ENCODE measurements at regions of chr14 and their contacts with region 1.

Region 1: GRCh38 chr14:104387022-104388010 is 192.2 kb upstream of the C14orf180 start:
- DNase-seq: no peak
- H3K4me3 ChIP-seq: no peak overlapping the region
- H3K27ac ChIP-seq: no peak overlapping the region
- H3K4me1 ChIP-seq: no peaks in the 10 kb centered on the region
- H3K27me3 ChIP-seq: no peaks in the 10 kb centered on the region
- CTCF ChIP-seq: no peak

Region 2: DNA sequence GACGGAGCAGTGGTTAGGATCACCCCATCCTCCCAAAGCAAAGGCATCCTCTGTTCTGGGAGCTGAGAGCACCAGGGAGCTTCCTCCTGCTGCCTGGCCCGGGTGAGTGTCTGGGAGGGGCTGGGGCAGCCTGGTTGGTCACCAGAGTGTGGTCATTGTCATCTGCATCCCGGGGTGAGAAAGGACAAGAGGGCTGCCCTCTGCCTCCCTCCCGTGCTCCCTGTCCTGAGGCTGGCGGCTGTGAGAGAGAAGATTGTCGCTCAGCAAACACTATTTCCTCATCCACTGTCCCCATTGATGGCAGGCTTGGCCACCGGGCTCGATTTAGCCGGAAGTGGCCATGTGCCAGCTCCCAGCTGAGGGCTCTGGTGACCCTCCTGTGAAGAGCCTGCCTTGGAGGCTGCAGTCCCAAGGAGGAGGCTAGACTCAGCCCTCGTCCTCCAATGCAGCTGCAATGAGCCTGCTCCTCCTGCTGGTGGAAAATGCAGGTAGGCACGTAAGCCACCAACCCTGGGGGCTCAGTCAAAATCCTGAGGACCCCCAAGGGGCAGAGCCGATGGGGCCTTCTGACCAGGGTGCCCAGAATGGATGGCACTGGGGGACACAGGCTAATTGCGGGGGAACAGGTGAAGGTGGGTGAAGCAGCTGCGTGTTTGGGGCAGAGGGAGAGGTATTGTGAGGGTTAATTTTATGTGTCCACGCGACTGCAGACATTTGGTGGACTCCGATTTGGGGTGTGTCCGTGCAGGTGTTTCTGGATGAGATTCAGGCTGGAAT is 93.3 kb before region 1 on chr14:
- CTCF ChIA-PET with region 1: no interaction called
- dilution Hi-C with region 1: loop called (anchors 5 kb)
- in situ Hi-C with region 1: no loop called
- intact Hi-C with region 1: no loop called
- DNase-seq: no peak
- H3K4me3 ChIP-seq: no peak overlapping the region
- H3K27ac ChIP-seq: no peak overlapping the region
- H3K4me1 ChIP-seq: no peaks in the 10 kb centered on the region
- H3K27me3 ChIP-seq: no peaks in the 10 kb centered on the region
- CTCF ChIP-seq: no peak

Region 3: DNA sequence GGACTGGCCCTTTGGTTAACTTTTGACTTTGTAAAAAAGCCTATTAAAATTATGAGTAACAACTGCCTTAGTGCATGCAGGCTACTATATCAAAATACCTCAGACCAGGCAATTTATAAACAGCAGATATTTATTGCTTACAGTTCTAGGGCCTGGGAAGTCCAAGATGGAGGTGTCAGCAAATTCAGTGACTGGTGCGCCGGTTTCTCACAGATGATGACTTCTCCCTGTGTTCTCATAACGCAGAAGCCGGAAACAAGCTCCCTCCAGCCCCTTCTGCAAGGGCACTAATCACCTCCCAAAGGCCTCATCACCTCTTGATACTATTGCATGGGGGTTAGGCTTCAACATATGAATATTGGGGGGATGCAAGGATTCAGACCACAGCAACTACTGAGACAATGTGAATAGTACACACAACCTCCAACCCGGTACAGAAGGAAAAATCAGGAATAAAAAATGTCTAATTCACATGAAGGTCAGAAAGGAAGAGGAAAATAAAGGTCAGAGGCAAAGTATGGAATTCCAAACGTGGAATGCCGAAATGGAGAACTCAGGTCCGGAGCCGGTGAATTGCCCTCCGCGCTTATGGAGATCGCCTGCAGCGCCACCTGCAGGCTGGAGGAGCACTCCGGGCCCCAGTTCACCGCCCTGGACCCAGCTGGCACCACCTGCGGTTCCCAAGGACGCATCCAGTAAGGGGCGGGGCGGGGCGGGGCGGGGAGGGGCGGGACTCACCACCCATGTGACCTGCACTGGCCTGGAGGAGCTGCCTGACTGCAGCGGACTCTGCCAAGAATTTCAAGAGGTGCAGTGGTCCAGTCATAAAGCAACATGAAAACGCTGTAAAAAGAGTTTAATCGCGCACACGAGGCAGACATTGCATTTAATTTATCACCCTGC is 45.5 kb before region 1 on chr14:
- CTCF ChIA-PET with region 1: no interaction called
- dilution Hi-C with region 1: loop called (anchors 5 kb)
- in situ Hi-C with region 1: no loop called
- intact Hi-C with region 1: no loop called
- DNase-seq: no peak
- H3K4me3 ChIP-seq: no peak overlapping the region
- H3K27ac ChIP-seq: no peak overlapping the region
- H3K4me1 ChIP-seq: no peaks in the 10 kb centered on the region
- H3K27me3 ChIP-seq: no peaks in the 10 kb centered on the region
- CTCF ChIP-seq: peak in 1 of 2 donors; percentile 17

Region 4: DNA sequence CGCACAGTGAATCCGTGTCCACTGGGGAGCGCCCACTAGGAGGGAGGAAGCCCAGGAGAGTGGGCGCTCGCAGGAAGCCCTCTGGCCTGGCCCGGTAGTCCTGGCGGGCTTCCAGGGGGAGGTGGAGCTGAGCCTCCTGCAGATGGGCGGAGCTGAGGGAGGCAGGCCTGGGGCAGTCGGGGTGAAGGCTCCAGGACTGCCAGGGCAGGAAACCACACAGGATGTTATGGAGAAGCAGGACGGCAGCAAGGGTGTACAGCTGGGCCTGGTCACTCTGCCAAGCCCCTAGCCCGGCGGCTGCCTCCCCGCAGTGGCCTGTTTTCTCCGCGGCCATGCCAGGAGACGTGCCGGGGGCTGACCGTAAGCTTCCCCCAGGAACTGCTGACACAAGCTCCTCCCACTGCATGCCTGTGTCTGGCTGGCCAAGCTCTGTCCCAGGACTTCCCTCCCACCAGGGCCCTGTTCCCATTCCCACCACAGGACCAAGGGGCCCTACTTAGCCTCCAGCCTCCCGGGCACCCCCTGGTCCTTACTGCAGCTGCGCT is 48.8 kb after region 1 on chr14:
- CTCF ChIA-PET with region 1: no interaction called
- dilution Hi-C with region 1: loop called (anchors 5 kb)
- in situ Hi-C with region 1: no loop called
- intact Hi-C with region 1: no loop called
- DNase-seq: no peak
- H3K4me3 ChIP-seq: no peak overlapping the region
- H3K27ac ChIP-seq: no peak overlapping the region
- H3K4me1 ChIP-seq: no peaks in the 10 kb centered on the region
- H3K27me3 ChIP-seq: no peaks in the 10 kb centered on the region
- CTCF ChIP-seq: no peak